CD14-positive monocyte (primary cell): ENCODE measurements at regions of chr20 and their contacts with region 1.

Region 1: DNA sequence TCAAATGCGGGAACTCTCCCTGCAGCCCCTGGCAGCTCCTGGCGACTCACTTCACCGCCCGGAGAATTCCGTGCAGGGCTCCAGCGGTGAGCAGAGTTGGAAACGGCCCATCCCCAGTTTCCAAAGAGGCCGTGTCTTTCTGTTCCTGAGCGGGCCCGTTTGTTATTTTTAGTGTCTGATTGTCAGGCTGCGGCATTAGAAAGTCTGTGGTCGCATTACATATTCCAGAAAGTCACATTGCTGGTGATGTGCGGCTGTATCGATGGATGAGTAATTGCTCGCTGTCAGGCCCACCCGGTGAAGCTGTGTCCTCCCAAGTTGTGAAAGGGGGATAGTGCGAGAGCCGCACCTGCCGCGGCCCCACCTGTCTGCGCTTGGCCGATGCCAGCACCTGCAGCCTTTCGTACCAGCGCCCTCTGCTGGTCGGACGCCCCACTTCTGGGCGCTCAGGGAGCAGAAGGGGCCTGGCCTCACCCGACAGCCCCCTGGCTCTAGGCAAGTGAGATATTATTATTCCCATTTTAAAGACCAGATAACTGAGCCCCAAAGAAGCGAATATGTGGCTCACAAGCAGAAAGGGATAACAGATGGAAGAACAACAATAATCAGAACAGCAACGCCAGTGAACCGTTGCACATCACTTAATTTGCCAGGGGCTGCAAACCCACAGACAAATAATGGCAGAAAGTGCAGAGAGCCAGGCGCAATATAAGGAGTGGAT is 244.9 kb downstream of the TSHZ2 start:
- DNase-seq: peak; percentile 6 to 33 (median 26)
- H3K4me3 ChIP-seq: no peak overlapping the region
- H3K4me3 Mint-ChIP-seq: peak overlapping the region in 1 of 2 donors; percentile 33
- H3K27ac ChIP-seq: no peak overlapping the region
- H3K27ac Mint-ChIP-seq: peak overlapping the region in 1 of 7 donors; percentile 62
- H3K4me1 ChIP-seq: no peaks in the 10 kb centered on the region
- H3K4me1 Mint-ChIP-seq: no peaks in the 10 kb centered on the region
- H3K27me3 ChIP-seq: peaks cover 2 to 5% of the 10 kb centered on the region in 2 donors
- H3K27me3 Mint-ChIP-seq: peaks cover 6 to 8% (median 8%) of the 10 kb centered on the region in 3 donors
- CTCF ChIP-seq: peak; percentile 92

Region 2: DNA sequence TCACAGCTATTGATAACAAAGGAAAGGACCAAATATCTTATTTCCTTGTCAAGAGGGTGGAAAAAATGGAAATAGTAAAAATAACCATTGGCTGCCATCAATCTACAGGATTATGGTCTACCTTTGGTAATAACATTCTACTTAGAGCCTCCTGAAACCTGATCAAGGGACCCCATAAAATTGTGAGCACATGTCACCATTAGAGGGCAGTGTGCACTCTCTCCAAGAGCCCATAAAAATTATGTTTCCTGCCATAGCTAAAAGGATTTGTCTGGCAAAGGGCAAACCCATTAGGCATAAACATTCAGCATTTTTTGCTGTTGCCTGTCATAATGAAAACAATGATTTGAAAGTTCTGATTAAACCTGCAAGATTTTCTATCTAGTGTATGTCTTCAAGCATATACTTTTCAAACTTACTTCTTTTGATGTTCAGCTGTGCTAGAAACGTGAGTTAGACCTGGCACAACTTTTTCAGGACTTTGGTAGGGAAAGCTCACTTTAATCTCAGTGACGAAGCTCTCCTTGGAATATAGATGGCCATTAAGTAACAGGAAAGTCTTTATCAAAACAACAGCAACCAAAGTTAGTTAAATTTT is 904.8 kb before region 1 on chr20:
- intact Hi-C with region 1: loop called (anchors 2 to 5 kb)
- DNase-seq: peak; percentile 8 to 35 (median 24)
- H3K4me3 ChIP-seq: no peak overlapping the region
- H3K4me3 Mint-ChIP-seq: no peak overlapping the region
- H3K27ac ChIP-seq: no peak overlapping the region
- H3K27ac Mint-ChIP-seq: no peak overlapping the region
- H3K4me1 ChIP-seq: peaks cover 2 to 11% of the 10 kb centered on the region in 2 donors
- H3K4me1 Mint-ChIP-seq: peaks cover 5% of the 10 kb centered on the region
- H3K27me3 ChIP-seq: no peaks in the 10 kb centered on the region
- H3K27me3 Mint-ChIP-seq: peaks cover 8 to 20% (median 13%) of the 10 kb centered on the region in 3 donors
- CTCF ChIP-seq: peak; percentile 79

Region 3: DNA sequence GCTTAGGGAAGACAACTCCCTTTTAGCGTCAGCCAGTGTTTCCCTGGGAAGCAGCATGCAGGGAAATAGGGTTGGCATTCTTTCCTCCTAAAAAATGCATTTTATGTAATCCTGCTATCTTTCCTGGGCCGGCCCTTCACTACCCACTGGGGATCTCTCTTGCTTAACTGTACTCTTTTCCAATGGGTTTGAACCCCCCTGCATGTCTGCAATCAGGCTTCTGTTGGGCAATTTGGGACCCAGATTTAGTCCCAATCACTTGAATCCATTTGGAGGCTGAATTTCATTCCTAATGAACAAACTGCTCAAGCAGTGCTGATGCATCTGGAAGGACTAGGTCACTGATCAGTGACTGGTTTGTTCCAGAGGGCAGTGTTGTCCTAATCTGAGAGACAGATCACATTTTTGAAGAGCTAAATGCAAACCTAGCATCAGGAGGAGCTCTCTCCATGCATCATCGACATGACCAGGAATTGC is 92.9 kb before region 1 on chr20:
- intact Hi-C with region 1: no loop called
- DNase-seq: no peak
- H3K4me3 ChIP-seq: no peak overlapping the region
- H3K4me3 Mint-ChIP-seq: no peak overlapping the region
- H3K27ac ChIP-seq: no peak overlapping the region
- H3K27ac Mint-ChIP-seq: no peak overlapping the region
- H3K4me1 ChIP-seq: no peaks in the 10 kb centered on the region
- H3K4me1 Mint-ChIP-seq: no peaks in the 10 kb centered on the region
- H3K27me3 ChIP-seq: no peaks in the 10 kb centered on the region
- H3K27me3 Mint-ChIP-seq: peaks cover 2 to 4% (median 3%) of the 10 kb centered on the region in 3 donors
- CTCF ChIP-seq: no peak